ENCODE measurements at regions of chr15 and their contacts with region 1.

Region 1: DNA sequence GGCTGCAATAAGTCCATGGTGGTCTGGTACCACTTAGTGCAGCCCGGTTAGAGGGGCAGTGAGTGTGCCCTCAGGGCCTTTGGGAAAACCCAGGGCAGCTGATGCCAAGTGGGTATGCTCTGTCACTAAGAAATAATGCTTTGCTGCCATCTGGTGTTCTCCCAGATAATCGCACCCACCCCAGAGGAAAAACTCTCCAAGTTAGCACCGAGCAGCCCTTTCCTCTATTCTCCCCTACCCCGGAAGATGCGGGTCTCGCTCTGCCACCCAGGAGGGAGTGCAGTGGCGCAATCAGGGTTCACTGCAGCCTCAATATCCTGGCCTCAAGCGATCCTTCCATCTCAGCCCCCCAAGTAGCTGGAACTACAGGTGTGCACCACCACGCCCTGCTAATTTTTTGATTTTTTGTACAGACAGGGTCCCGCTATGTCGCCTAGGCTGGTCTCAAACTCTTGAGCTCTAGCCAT is 21.3 kb upstream of the DAPK2 start:
- DNase-seq: peak; percentile 44 to 83 (median 62)
- ATAC-seq: peak; percentile 89
- H3K4me3 ChIP-seq: no peak overlapping the region
- H3K4me3 Mint-ChIP-seq: no peak overlapping the region
- H3K27ac ChIP-seq: no peak overlapping the region
- H3K27ac Mint-ChIP-seq: no peak overlapping the region
- H3K4me1 ChIP-seq: peaks cover 7% of the 10 kb centered on the region
- H3K4me1 Mint-ChIP-seq: no peaks in the 10 kb centered on the region
- H3K27me3 ChIP-seq: no peaks in the 10 kb centered on the region
- H3K27me3 Mint-ChIP-seq: no peaks in the 10 kb centered on the region
- CTCF ChIP-seq: peak; percentile 75

Region 2: GRCh38 chr15:63610200-63610841 is 457.3 kb before region 1 on chr15:
- CTCF ChIA-PET with region 1: interaction called, 5 read pairs
- POLR2A ChIA-PET with region 1: interaction called, 8 read pairs
- intact Hi-C with region 1: loop called (anchors 1 to 2 kb)
- DNase-seq: peak; percentile 47 to 88 (median 66)
- ATAC-seq: peak; percentile 81
- H3K4me3 ChIP-seq: no peak overlapping the region
- H3K4me3 Mint-ChIP-seq: peak overlapping the region; percentile 52
- H3K27ac ChIP-seq: peak overlapping the region; percentile 48 to 73
- H3K27ac Mint-ChIP-seq: peak overlapping the region; percentile 61
- H3K4me1 ChIP-seq: peaks cover 32% of the 10 kb centered on the region
- H3K4me1 Mint-ChIP-seq: peaks cover 46% of the 10 kb centered on the region
- H3K27me3 ChIP-seq: no peaks in the 10 kb centered on the region
- H3K27me3 Mint-ChIP-seq: no peaks in the 10 kb centered on the region
- CTCF ChIP-seq: peak; percentile 74

Region 3: GRCh38 chr15:63826528-63826927 is 241.1 kb before region 1 on chr15:
- CTCF ChIA-PET with region 1: interaction called, 4 read pairs
- POLR2A ChIA-PET with region 1: interaction called, 5 read pairs
- intact Hi-C with region 1: loop called (anchors 1 to 5 kb)
- DNase-seq: peak in 4 of 14 experiments; percentile 45 to 75 (median 66)
- ATAC-seq: no peak
- H3K4me3 ChIP-seq: no peak overlapping the region
- H3K4me3 Mint-ChIP-seq: peak overlapping the region; percentile 74
- H3K27ac ChIP-seq: no peak overlapping the region
- H3K27ac Mint-ChIP-seq: peak overlapping the region; percentile 62
- H3K4me1 ChIP-seq: peaks cover 21% of the 10 kb centered on the region
- H3K4me1 Mint-ChIP-seq: peaks cover 91% of the 10 kb centered on the region
- H3K27me3 ChIP-seq: no peaks in the 10 kb centered on the region
- H3K27me3 Mint-ChIP-seq: no peaks in the 10 kb centered on the region
- CTCF ChIP-seq: peak; percentile 62

Region 4: DNA sequence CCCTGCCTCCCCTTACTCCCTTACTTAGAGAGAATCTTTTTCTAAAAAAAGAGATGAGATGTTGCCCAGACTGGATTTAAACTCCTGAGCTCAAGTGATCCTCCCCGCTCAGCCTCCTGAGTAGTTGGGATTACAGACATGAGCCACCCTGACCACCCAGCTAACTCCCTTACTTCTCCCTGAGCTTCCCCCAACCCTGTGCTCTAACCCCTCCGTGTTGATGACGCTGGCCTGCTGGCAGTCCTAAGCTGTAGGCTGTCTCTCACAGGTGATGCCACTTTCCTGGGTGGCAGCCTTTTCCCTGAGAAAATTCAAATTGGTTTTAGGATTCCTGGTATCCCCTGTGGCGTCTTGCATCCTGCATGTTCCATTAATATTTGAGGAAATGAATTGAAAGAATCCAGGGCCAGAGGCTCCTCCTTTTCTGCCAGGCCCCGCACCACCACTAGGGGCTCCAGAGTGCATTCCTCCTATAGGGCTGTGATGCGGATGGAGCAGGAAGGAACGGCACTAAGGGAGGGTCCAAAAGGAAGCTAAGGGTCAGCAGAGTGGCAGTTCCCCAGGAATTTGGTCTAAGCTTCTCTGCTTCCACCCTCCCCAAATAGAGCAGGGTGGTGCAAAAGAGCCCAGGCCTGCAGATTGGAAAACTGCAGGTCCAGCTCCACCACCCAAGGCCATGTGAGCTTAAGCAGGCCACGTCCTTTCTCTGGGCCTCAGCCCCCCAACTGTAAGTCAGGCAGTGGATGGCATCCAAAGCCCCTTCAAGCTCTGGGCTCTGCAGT is 122.4 kb before region 1 on chr15:
- CTCF ChIA-PET with region 1: interaction called, 19 read pairs
- POLR2A ChIA-PET with region 1: no interaction called
- intact Hi-C with region 1: loop called in 1 of 2 experiments (anchors 5 kb)
- DNase-seq: peak; percentile 44 to 77 (median 59)
- ATAC-seq: peak; percentile 98
- H3K4me3 ChIP-seq: no peak overlapping the region
- H3K4me3 Mint-ChIP-seq: no peak overlapping the region
- H3K27ac ChIP-seq: no peak overlapping the region
- H3K27ac Mint-ChIP-seq: peak overlapping the region; percentile 21
- H3K4me1 ChIP-seq: peaks cover 13% of the 10 kb centered on the region
- H3K4me1 Mint-ChIP-seq: peaks cover 16% of the 10 kb centered on the region
- H3K27me3 ChIP-seq: no peaks in the 10 kb centered on the region
- H3K27me3 Mint-ChIP-seq: no peaks in the 10 kb centered on the region
- CTCF ChIP-seq: peak; percentile 93

Region 5: DNA sequence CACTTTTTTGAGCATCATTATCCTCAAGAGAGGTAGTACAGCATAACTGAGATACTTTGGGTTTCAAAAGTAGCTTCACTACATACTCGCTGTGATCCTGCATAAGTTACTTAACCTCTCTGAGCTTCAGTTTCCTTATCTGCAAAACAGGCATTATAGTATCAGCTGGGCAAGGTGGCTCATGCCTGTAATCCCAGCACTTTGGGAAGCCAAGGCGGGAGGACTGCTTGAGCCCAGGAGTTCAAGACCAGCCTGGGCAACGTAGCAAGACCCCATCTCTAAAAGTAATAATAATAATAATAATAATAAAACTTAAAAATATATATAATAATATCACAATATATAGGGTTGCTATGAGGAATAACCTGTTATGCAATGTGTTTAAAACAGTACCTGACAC is 15.2 kb after region 1 on chr15:
- CTCF ChIA-PET with region 1: no interaction called
- POLR2A ChIA-PET with region 1: no interaction called
- intact Hi-C with region 1: no loop called
- DNase-seq: no peak
- ATAC-seq: no peak
- H3K4me3 ChIP-seq: no peak overlapping the region
- H3K4me3 Mint-ChIP-seq: no peak overlapping the region
- H3K27ac ChIP-seq: no peak overlapping the region
- H3K27ac Mint-ChIP-seq: no peak overlapping the region
- H3K4me1 ChIP-seq: no peaks in the 10 kb centered on the region
- H3K4me1 Mint-ChIP-seq: peaks cover under 1% of the 10 kb centered on the region
- H3K27me3 ChIP-seq: no peaks in the 10 kb centered on the region
- H3K27me3 Mint-ChIP-seq: no peaks in the 10 kb centered on the region
- CTCF ChIP-seq: no peak

Measured in CD4-positive, alpha-beta T cell (primary cell).